Breast epithelium (tissue), 4 donors: ENCODE measurements at regions of chr5 and their contacts with region 1.

Region 1: DNA sequence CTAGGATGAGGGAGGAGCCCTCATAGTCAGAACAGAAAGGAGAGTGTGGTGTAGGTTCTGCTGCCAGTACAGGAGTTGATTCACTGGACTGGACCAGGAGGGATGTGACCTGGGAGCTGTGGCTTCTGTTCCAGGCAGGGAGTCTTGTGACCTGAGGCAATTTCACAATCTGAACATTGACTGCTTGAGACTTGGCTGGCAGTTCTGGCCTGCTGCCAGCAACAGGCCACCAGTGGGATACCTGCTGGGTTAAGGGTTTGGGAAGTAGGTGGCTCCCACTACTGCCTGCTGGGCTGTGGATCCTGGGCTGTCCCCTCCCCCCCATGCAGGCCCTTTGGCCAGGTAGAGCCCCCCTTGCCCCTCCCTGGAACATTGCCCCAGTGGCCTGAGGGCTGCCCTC is 268.6 kb upstream of the ARRDC3 start:
- DNase-seq: no peak
- H3K4me3 ChIP-seq: no peak overlapping the region
- H3K27ac ChIP-seq: no peak overlapping the region
- H3K4me1 ChIP-seq: no peaks in the 10 kb centered on the region
- H3K27me3 ChIP-seq: no peaks in the 10 kb centered on the region
- CTCF ChIP-seq: no peak
- POLR2A ChIP-seq: no peak

Region 2: GRCh38 chr5:91098541-91098940 is 553.2 kb before region 1 on chr5:
- intact Hi-C with region 1: no loop called
- DNase-seq: no peak
- H3K4me3 ChIP-seq: no peak overlapping the region
- H3K27ac ChIP-seq: no peak overlapping the region
- H3K4me1 ChIP-seq: no peaks in the 10 kb centered on the region
- H3K27me3 ChIP-seq: no peaks in the 10 kb centered on the region
- CTCF ChIP-seq: no peak
- POLR2A ChIP-seq: no peak

Region 3: GRCh38 chr5:91635950-91636734 is 15.6 kb before region 1 on chr5:
- intact Hi-C with region 1: loop called (anchors 2 kb)
- DNase-seq: no peak
- H3K4me3 ChIP-seq: no peak overlapping the region
- H3K27ac ChIP-seq: no peak overlapping the region
- H3K4me1 ChIP-seq: no peaks in the 10 kb centered on the region
- H3K27me3 ChIP-seq: no peaks in the 10 kb centered on the region
- CTCF ChIP-seq: no peak
- POLR2A ChIP-seq: no peak